Activated B cell treated with CpG ODN at 0.5 μM for 24 hours (primary cell): ENCODE measurements at regions of chr2 and their contacts with region 1.

Region 1: DNA sequence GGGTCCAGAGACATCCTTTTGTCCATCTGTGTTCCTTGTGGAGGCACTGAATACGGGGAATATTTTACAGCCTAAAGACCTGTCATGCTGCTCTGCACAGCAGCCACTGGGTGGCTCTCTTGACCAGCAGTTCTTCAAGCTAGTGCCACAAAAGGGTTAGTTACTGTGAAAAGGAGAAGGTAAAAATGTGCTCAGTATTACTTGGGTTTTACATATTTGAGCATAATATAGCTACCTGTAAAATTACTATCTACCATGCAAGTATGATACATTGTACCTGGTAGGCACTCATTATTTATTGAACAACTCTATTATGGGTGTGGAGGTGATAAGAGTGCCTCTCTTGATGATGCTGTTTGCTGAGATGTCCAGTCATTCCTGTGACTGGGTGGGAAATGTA is 23.6 kb downstream of the FZD5 start:
- DNase-seq: peak; percentile 22
- ATAC-seq: peak; percentile 95
- H3K4me3 Mint-ChIP-seq: no peak overlapping the region
- H3K27ac Mint-ChIP-seq: no peak overlapping the region
- H3K4me1 Mint-ChIP-seq: no peaks in the 10 kb centered on the region
- H3K27me3 Mint-ChIP-seq: no peaks in the 10 kb centered on the region
- CTCF ChIP-seq: peak; percentile 46

Region 2: GRCh38 chr2:207759890-207760289 is 13.8 kb after region 1 on chr2:
- CTCF ChIA-PET with region 1: interaction called, 10 read pairs
- POLR2A ChIA-PET with region 1: no interaction called
- intact Hi-C with region 1: no loop called
- DNase-seq: no peak
- ATAC-seq: no peak
- H3K4me3 Mint-ChIP-seq: no peak overlapping the region
- H3K27ac Mint-ChIP-seq: no peak overlapping the region
- H3K4me1 Mint-ChIP-seq: peaks cover 7% of the 10 kb centered on the region
- H3K27me3 Mint-ChIP-seq: peaks cover 3% of the 10 kb centered on the region
- CTCF ChIP-seq: no peak

Region 3: GRCh38 chr2:207974216-207974605 is 228.1 kb after region 1 on chr2:
- CTCF ChIA-PET with region 1: interaction called, 8 read pairs
- POLR2A ChIA-PET with region 1: no interaction called
- intact Hi-C with region 1: loop called (anchors 1 kb)
- DNase-seq: no peak
- ATAC-seq: no peak
- H3K4me3 Mint-ChIP-seq: no peak overlapping the region
- H3K27ac Mint-ChIP-seq: no peak overlapping the region
- H3K4me1 Mint-ChIP-seq: peaks cover 17% of the 10 kb centered on the region
- H3K27me3 Mint-ChIP-seq: no peaks in the 10 kb centered on the region
- CTCF ChIP-seq: no peak

Region 4: GRCh38 chr2:208033758-208034502 is 287.8 kb after region 1 on chr2:
- CTCF ChIA-PET with region 1: interaction called, 127 read pairs
- POLR2A ChIA-PET with region 1: no interaction called
- intact Hi-C with region 1: loop called (anchors 1 kb)
- DNase-seq: no peak
- ATAC-seq: peak; percentile 69
- H3K4me3 Mint-ChIP-seq: no peak overlapping the region
- H3K27ac Mint-ChIP-seq: no peak overlapping the region
- H3K4me1 Mint-ChIP-seq: no peaks in the 10 kb centered on the region
- H3K27me3 Mint-ChIP-seq: no peaks in the 10 kb centered on the region
- CTCF ChIP-seq: no peak

Region 5: GRCh38 chr2:208040199-208041171 is 294.4 kb after region 1 on chr2:
- CTCF ChIA-PET with region 1: interaction called, 127 read pairs
- POLR2A ChIA-PET with region 1: interaction called, 6 read pairs
- intact Hi-C with region 1: loop called (anchors 1 kb)
- DNase-seq: peak; percentile 41
- ATAC-seq: peak; percentile 91
- H3K4me3 Mint-ChIP-seq: no peak overlapping the region
- H3K27ac Mint-ChIP-seq: no peak overlapping the region
- H3K4me1 Mint-ChIP-seq: no peaks in the 10 kb centered on the region
- H3K27me3 Mint-ChIP-seq: peaks cover 2% of the 10 kb centered on the region
- CTCF ChIP-seq: peak; percentile 47

Region 6: DNA sequence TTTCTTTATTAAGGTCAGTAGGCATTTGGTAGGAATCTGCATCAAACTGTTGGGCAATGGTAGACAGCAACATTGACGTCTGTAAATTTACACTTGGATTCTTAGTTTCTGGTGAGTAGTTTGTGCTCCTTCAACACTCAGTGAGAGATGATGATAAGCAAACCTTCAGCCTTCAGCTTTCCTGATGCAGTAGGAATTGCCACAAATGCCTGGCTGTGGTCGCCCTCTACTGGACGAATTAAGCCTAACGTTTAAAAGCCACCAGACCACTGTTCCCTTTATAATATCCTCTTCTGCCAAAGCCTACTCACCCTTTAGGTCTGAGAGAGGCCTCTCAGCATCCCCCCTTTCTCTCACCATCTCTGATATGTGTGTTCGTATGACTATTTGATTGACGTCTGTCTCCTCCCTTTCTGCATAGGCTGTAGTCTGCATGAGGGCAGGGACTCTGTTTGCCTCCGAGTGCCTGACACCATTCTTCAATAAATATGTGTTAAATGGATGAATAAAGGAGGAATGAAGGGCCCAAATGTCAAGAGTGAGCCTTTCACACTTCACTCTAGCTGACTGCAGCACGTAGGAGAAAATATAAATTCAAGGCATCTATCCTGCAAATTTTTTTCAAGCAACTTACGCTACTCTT is 326.2 kb after region 1 on chr2:
- CTCF ChIA-PET with region 1: interaction called, 44 read pairs
- POLR2A ChIA-PET with region 1: no interaction called
- intact Hi-C with region 1: loop called (anchors 1 kb)
- DNase-seq: no peak
- ATAC-seq: peak; percentile 71
- H3K4me3 Mint-ChIP-seq: no peak overlapping the region
- H3K27ac Mint-ChIP-seq: no peak overlapping the region
- H3K4me1 Mint-ChIP-seq: no peaks in the 10 kb centered on the region
- H3K27me3 Mint-ChIP-seq: peaks cover 7% of the 10 kb centered on the region
- CTCF ChIP-seq: peak; percentile 63